ENCODE measurements at regions of chr17 and their contacts with region 1.

Region 1: GRCh38 chr17:32755045-32755805 is 121.7 kb downstream of the MYO1D start:
- DNase-seq: peak in 1 of 2 experiments; percentile 57
- H3K4me3 ChIP-seq: no peak overlapping the region
- H3K27ac ChIP-seq: no peak overlapping the region
- H3K4me1 ChIP-seq: no peaks in the 10 kb centered on the region
- H3K27me3 ChIP-seq: no peaks in the 10 kb centered on the region
- CTCF ChIP-seq: peak; percentile 76

Region 2: DNA sequence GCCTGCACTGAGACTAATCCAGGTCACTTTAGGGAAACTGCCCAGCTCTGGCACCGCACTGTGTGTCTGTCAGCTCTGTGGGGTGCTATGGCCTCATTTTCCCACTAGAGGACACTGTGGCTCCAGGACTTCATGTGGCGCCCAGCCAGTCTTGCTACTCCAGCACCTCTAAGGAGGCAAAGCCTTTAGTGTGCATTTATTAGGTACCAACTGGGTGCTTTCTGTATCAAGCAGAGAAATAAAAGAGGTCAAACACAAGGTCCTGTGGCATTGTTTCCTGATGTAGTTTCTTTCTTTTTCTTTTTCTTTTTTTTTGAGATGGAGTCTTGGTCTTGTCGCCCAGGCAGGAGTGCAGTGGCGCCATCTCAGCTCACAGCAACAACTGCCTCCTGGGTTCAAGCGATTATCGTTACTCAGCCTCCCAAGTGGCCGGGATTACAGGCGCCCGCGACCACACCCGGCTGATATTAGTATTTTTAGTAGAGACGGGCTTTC is 502.1 kb before region 1 on chr17:
- CTCF ChIA-PET with region 1: no interaction called
- POLR2A ChIA-PET with region 1: no interaction called
- intact Hi-C with region 1: loop called (anchors 10 kb)
- DNase-seq: peak; percentile 50 to 77
- H3K4me3 ChIP-seq: no peak overlapping the region
- H3K27ac ChIP-seq: no peak overlapping the region
- H3K4me1 ChIP-seq: no peaks in the 10 kb centered on the region
- H3K27me3 ChIP-seq: no peaks in the 10 kb centered on the region
- CTCF ChIP-seq: peak; percentile 95

Region 3: DNA sequence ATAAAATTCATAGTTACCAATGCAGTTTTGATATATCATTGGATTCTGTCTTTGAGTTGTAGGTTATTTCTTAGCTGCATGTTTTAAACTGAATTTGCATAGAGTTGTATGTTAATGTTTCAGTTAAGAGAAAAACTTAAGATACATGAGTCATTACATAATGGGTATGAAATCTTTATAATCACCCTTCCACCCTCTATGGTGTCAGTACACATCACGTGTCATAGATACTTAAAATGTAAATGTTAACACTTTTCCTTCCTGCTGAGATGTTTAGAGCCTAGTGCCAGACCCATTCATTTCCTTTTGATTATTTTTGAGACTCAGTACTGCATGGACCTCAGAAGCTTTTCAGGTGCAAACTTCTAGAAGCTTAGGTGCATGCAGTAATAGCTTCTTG is 384.8 kb before region 1 on chr17:
- CTCF ChIA-PET with region 1: no interaction called
- POLR2A ChIA-PET with region 1: no interaction called
- intact Hi-C with region 1: no loop called
- DNase-seq: no peak
- H3K4me3 ChIP-seq: no peak overlapping the region
- H3K27ac ChIP-seq: no peak overlapping the region
- H3K4me1 ChIP-seq: no peaks in the 10 kb centered on the region
- H3K27me3 ChIP-seq: no peaks in the 10 kb centered on the region
- CTCF ChIP-seq: no peak

Region 4: DNA sequence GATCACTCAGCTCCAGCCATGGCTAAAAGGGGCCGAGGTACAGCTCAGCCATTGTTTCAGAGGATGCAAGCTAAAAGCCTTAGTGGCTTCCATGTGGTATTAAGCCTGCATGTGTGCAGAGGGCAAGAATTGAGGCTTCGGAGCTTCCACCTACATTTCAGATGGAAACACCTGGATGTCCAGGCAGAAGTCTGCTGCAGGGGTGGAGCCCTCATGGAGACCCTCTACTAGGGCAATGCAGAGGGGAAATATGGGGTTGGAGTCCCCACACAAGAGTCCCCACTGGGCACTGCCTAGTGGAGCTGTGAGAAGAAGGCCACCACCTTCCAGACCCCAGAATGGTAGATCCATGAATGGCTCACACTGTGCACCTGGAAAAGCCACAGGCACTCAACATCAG is 325.6 kb before region 1 on chr17:
- CTCF ChIA-PET with region 1: no interaction called
- POLR2A ChIA-PET with region 1: no interaction called
- intact Hi-C with region 1: no loop called
- DNase-seq: no peak
- H3K4me3 ChIP-seq: no peak overlapping the region
- H3K27ac ChIP-seq: no peak overlapping the region
- H3K4me1 ChIP-seq: no peaks in the 10 kb centered on the region
- H3K27me3 ChIP-seq: no peaks in the 10 kb centered on the region
- CTCF ChIP-seq: no peak

Region 5: DNA sequence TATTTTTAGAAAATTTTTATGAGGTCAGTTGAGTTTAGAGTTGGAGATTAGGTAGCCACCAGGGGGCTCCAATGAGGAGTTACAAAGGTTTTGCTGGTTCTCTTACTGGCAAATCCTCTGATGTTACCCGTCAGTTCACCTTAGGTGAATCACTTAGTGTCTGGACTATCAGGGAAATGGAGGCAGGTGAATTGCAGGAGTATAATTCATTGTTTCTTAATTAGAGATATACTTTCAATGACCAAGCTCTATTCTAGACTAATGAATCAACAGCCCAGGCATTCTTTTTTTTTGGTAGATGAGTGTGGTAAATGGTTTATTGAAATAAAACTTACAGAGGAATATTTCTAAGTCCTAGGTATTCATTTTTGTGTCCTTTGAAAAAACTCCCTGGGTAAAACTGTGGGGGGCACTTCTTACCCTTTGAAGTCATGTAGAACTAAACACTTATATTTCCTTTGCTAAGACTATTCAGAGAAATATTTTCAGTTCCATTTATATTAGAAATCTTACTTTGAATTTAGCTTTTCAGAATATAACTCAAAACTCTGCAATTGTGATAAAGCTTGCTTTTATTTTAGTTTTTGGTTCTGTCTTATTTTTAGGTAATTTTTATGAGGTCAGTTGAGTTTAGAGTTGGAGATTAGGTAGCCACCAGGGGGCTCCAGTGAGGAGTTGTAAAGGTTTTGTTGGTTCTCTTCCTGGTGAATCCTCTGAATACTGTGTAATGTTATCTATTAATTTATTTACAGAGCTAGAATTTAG is 293.2 kb before region 1 on chr17:
- CTCF ChIA-PET with region 1: interaction called, 3 read pairs
- POLR2A ChIA-PET with region 1: no interaction called
- intact Hi-C with region 1: loop called (anchors 1 kb)
- DNase-seq: peak in 1 of 2 experiments; percentile 41
- H3K4me3 ChIP-seq: no peak overlapping the region
- H3K27ac ChIP-seq: no peak overlapping the region
- H3K4me1 ChIP-seq: no peaks in the 10 kb centered on the region
- H3K27me3 ChIP-seq: no peaks in the 10 kb centered on the region
- CTCF ChIP-seq: peak; percentile 65

Region 6: DNA sequence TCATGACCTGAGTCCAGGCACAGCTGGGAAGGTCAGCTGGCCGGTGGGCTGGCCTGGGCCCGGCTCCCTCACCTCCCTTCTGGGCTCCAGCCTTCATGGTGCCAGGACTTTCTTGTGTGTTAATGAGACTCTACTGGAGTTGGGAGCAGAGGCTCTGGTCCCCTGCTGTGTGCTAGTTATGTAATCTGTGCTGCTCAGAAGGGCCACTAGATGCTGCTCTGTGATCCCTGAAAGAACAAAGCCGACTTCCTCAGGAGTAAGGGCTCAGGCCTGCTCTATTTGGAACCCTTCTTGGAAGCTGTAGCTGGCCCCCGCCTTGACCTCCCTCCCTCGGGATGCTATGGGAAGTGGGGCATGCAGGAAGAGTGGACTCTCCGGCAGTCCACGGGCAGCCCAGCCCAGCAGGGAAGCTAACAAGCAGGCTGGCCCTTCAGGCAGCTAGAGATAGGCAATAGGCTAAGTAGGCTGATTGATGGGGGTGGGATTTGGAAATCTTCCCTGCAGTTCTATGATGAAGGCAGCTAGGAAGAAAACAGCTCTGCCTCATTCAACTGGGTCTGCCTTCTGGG is 271.7 kb before region 1 on chr17:
- CTCF ChIA-PET with region 1: interaction called, 4 read pairs
- POLR2A ChIA-PET with region 1: interaction called, 6 read pairs
- intact Hi-C with region 1: loop called (anchors 1 kb)
- DNase-seq: peak; percentile 37 to 53
- H3K4me3 ChIP-seq: no peak overlapping the region
- H3K27ac ChIP-seq: no peak overlapping the region
- H3K4me1 ChIP-seq: peaks cover 8% of the 10 kb centered on the region; the same call in 1 of the 2 replicates
- H3K27me3 ChIP-seq: no peaks in the 10 kb centered on the region
- CTCF ChIP-seq: peak; percentile 61; the same call in 1 of the 2 replicates

Region 7: GRCh38 chr17:32659419-32659842 is 95.8 kb before region 1 on chr17:
- CTCF ChIA-PET with region 1: no interaction called
- POLR2A ChIA-PET with region 1: no interaction called
- intact Hi-C with region 1: loop called (anchors 1 kb)
- DNase-seq: peak in 1 of 2 experiments; percentile 56
- H3K4me3 ChIP-seq: no peak overlapping the region
- H3K27ac ChIP-seq: no peak overlapping the region
- H3K4me1 ChIP-seq: no peaks in the 10 kb centered on the region
- H3K27me3 ChIP-seq: no peaks in the 10 kb centered on the region
- CTCF ChIP-seq: peak; percentile 93

Measured in PC-9 (cell line).